ENCODE measurements at regions of chr14 and their contacts with region 1.

Region 1: GRCh38 chr14:103546652-103547454 is 15.6 kb downstream of the BAG5 start:
- DNase-seq: peak; percentile 75 to 86
- ATAC-seq: peak; percentile 66 to 95 (median 84)
- H3K4me3 ChIP-seq: no peak overlapping the region
- H3K4me3 Mint-ChIP-seq: no peak overlapping the region
- H3K27ac ChIP-seq: no peak overlapping the region
- H3K27ac Mint-ChIP-seq: no peak overlapping the region
- H3K4me1 ChIP-seq: peaks cover 8% of the 10 kb centered on the region
- H3K4me1 Mint-ChIP-seq: peaks cover 0 to 6% of the 10 kb centered on the region in 2 donors
- H3K27me3 ChIP-seq: no peaks in the 10 kb centered on the region
- H3K27me3 Mint-ChIP-seq: no peaks in the 10 kb centered on the region
- CTCF ChIP-seq: peak; percentile 91

Region 2: DNA sequence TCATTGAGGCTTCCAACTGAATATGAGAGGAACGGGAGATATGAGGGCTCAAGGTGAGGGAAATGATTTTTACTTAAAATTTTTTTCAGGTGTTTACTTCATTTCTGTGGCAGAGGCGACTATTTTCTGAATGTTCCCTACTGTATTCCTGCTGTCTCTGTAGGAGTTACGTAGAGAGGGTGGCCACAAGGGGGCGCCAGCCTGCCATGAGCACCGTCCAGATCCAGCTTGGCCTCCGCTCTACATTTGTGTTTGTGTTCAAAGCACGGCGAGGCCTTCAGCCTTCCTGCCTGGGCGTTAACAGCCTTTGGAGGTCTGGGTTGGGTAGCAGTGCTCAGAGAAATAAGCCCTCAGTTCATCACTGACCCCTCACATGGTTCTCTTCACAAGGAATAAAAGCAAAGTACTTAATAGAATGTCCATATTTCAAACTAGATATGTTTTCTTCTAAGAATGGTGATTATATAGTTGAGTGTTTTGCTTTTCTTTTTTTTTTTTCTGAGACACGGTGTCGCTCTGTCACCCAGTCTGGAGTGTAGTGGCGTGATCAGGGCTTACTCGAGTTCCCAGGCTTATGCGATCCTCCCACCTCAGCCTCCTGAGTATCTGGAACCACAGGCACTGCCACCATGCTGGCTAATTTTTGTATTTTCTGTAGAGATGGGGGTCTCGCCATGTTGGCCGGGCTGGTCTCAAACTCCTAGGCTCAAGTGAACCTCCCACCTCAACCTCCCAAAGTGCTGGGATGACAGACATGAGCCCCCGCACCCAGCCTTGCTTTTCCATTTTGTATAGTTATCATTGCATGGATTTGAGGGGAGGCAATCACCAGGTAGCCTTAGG is 46.5 kb before region 1 on chr14:
- intact Hi-C with region 1: loop called (anchors 1 kb)
- DNase-seq: peak; percentile 76 to 87
- ATAC-seq: peak; percentile 88 to 94 (median 94)
- H3K4me3 ChIP-seq: no peak overlapping the region
- H3K4me3 Mint-ChIP-seq: no peak overlapping the region
- H3K27ac ChIP-seq: no peak overlapping the region
- H3K27ac Mint-ChIP-seq: no peak overlapping the region
- H3K4me1 ChIP-seq: no peaks in the 10 kb centered on the region
- H3K4me1 Mint-ChIP-seq: peaks cover 14 to 21% of the 10 kb centered on the region in 2 donors
- H3K27me3 ChIP-seq: no peaks in the 10 kb centered on the region
- H3K27me3 Mint-ChIP-seq: no peaks in the 10 kb centered on the region
- CTCF ChIP-seq: peak; percentile 94

Region 3: GRCh38 chr14:103518422-103519042 is 28.3 kb before region 1 on chr14:
- intact Hi-C with region 1: loop called (anchors 1 kb)
- DNase-seq: peak; percentile 49 to 78
- ATAC-seq: peak in 2 of 3 donors; percentile 30 to 37
- H3K4me3 ChIP-seq: no peak overlapping the region
- H3K4me3 Mint-ChIP-seq: peak overlapping the region; percentile 62
- H3K27ac ChIP-seq: no peak overlapping the region
- H3K27ac Mint-ChIP-seq: no peak overlapping the region
- H3K4me1 ChIP-seq: peaks cover 19% of the 10 kb centered on the region
- H3K4me1 Mint-ChIP-seq: peaks cover 0 to 14% of the 10 kb centered on the region in 2 donors
- H3K27me3 ChIP-seq: peaks cover 5% of the 10 kb centered on the region
- H3K27me3 Mint-ChIP-seq: peaks cover 0 to 6% of the 10 kb centered on the region in 2 donors
- CTCF ChIP-seq: peak; percentile 77